Activated T-helper 1 cell treated with anti-CD3 and anti-CD28 coated beads, Interleukin-12 subunit alpha, Interleukin-12 subunit beta, Interleukin-2, Interleukin-4 antibody, amounts not matched to agents 30 ng/mL and 10 ng/mL and 1 ng/mL, durations not matched to agents 14 hours and 24 hours and 36 hours (primary cell): ENCODE measurements at regions of chr4 and their contacts with region 1.

Region 1: GRCh38 chr4:89110986-89111832 is at the start of gene TIGD2:
- DNase-seq: peak; percentile 80
- H3K4me3 Mint-ChIP-seq: peak within 1 kb of the TSS; percentile 86
- H3K27ac Mint-ChIP-seq: peak within 1 kb of the TSS; percentile 71
- H3K4me1 Mint-ChIP-seq: peaks cover 27% of the 10 kb centered on the region
- H3K27me3 Mint-ChIP-seq: peaks cover 20% of the 10 kb centered on the region
- total RNA-seq, gene TIGD2: 2.0 and 2.3 TPM in 2 replicates

Region 2: GRCh38 chr4:88378691-88379559 is 732.3 kb before region 1 on chr4 and contains the start of gene HERC6:
- intact Hi-C with region 1: loop called (anchors 2 kb)
- DNase-seq: peak; percentile 80
- H3K4me3 Mint-ChIP-seq: peak within 1 kb of the TSS; percentile 89
- H3K27ac Mint-ChIP-seq: peak within 1 kb of the TSS; percentile 81
- H3K4me1 Mint-ChIP-seq: peaks cover 47% of the 10 kb centered on the region
- H3K27me3 Mint-ChIP-seq: no peaks in the 10 kb centered on the region
- total RNA-seq, gene HERC6: 6.0 and 9.1 TPM in 2 replicates

Region 3: DNA sequence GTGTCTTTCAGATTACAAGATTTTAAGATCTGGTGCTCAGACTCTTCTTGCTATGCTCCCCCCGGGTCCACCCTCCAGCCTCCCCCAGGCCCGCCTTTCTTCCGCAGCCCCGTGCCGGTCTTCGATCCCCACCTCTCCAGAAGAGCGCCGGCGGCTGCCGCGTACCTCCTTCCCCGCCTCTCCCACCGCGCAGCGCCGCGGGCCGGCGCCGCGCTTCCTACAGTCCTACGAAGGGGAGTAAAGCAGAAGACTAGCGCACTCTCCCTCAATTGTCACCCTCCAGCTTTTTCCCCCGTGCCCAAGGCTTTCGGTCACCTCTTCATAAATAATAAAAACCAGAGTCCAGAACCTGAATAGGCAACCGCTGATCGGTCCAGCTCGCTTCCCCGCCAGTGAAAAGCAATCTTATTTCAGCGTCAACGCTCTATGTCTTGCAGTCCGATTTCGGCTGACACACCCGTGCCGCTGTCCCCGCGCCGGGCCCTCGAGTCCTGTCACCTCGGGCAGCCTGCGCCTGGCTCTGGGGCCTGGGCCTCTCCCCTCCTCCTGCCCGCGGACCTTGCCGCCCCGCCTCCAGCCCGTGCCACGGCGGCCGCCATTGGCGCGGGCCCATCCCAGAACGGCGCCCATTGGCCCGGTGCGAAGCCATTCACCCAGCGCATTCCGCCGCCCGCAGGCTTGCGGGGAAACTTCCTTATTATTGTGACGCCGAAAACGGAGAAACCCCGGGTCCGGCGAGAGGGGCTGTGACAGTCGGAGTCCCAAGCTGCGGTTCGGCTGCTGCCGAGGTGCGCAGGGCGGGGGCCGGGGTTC is 519.2 kb before region 1 on chr4 and contains the start of gene HERC3:
- intact Hi-C with region 1: loop called (anchors 1 kb)
- DNase-seq: peak; percentile 88
- H3K4me3 Mint-ChIP-seq: peak within 1 kb of the TSS; percentile 91
- H3K27ac Mint-ChIP-seq: peak within 1 kb of the TSS; percentile 88
- H3K4me1 Mint-ChIP-seq: peaks cover 35% of the 10 kb centered on the region
- H3K27me3 Mint-ChIP-seq: peaks cover 28% of the 10 kb centered on the region
- total RNA-seq, gene HERC3: 12.8 and 14.2 TPM in 2 replicates

Region 4: GRCh38 chr4:88792268-88792781 is 318.9 kb before region 1 on chr4:
- intact Hi-C with region 1: loop called (anchors 5 kb)
- DNase-seq: no peak
- H3K4me3 Mint-ChIP-seq: no peak overlapping the region
- H3K27ac Mint-ChIP-seq: no peak overlapping the region
- H3K4me1 Mint-ChIP-seq: peaks cover 21% of the 10 kb centered on the region
- H3K27me3 Mint-ChIP-seq: peaks cover 21% of the 10 kb centered on the region

Region 5: DNA sequence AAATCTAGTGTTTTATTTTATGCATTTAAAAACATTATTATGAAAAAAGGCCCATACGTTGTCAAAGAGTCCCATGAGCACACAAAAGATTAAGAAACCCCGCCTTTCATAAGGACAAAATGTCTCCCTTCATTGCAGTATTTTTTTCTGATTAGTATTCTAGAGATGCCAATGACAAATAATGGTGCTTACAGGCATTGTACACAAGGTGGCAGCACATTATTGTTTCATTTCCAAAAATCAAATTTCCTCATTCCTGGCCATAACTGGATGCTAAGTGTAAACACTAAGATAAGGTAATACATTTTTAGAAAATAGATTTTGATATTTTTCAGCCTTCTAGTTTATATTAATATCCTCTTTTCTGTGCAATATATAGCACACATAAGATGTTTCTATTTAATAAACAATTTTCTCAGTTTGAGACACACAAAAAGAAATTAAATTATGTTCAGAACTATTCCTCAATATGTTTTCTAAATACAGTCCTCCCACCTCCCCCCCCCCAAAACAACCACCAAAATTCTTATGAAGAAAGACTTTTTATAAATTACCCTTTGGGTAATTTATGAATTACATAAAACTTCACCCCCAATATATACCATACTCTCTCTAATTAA is 47.8 kb after region 1 on chr4:
- intact Hi-C with region 1: loop called (anchors 2 kb)
- DNase-seq: no peak
- H3K4me3 Mint-ChIP-seq: no peak overlapping the region
- H3K27ac Mint-ChIP-seq: no peak overlapping the region
- H3K4me1 Mint-ChIP-seq: no peaks in the 10 kb centered on the region
- H3K27me3 Mint-ChIP-seq: peaks cover 13% of the 10 kb centered on the region

Region 6: GRCh38 chr4:89307446-89308160 is 196.4 kb after region 1 on chr4 and contains the start of gene GPRIN3:
- intact Hi-C with region 1: loop called (anchors 5 kb)
- DNase-seq: peak; percentile 58
- H3K4me3 Mint-ChIP-seq: peak within 1 kb of the TSS; percentile 95
- H3K27ac Mint-ChIP-seq: peak within 1 kb of the TSS; percentile 97
- H3K4me1 Mint-ChIP-seq: peaks cover 72% of the 10 kb centered on the region
- H3K27me3 Mint-ChIP-seq: no peaks in the 10 kb centered on the region
- total RNA-seq, gene GPRIN3: 37.1 and 39.0 TPM in 2 replicates